ENCODE measurements at regions of chr2 and their contacts with region 1.

Region 1: DNA sequence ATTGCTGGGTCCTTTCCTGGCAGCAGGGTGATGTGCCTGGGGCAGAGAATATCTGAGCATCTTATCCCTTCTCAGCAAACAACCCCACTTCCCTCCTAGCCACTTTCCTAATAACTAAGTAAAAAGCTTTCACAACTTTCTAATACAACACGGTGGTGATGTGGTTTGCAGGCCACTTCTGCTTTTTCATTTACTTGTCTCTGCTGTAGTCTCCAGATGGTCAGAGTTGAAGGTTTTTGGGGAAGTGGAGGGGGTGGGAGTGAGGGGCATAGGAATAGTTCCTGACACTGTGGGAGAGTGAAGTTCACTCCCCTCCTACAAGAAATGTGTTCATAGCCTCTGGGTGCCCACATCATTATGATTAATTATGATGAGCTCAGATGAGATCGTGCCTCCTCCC is 11.6 kb downstream of the OXER1 start:
- DNase-seq: peak; percentile 94 to 97 (median 95)
- H3K4me3 ChIP-seq: peak overlapping the region in 1 of 3 experiments; percentile 41
- H3K4me3 Mint-ChIP-seq: peak overlapping the region; percentile 28 to 75
- H3K27ac ChIP-seq: peak overlapping the region; percentile 89 to 90
- H3K27ac Mint-ChIP-seq: peak overlapping the region; percentile 97 to 99 (median 98)
- H3K4me1 ChIP-seq: peaks cover 64 to 71% of the 10 kb centered on the region in 2 donors
- H3K4me1 Mint-ChIP-seq: peaks cover 69% of the 10 kb centered on the region
- H3K27me3 ChIP-seq: no peaks in the 10 kb centered on the region
- H3K27me3 Mint-ChIP-seq: no peaks in the 10 kb centered on the region
- CTCF ChIP-seq: no peak

Region 2: DNA sequence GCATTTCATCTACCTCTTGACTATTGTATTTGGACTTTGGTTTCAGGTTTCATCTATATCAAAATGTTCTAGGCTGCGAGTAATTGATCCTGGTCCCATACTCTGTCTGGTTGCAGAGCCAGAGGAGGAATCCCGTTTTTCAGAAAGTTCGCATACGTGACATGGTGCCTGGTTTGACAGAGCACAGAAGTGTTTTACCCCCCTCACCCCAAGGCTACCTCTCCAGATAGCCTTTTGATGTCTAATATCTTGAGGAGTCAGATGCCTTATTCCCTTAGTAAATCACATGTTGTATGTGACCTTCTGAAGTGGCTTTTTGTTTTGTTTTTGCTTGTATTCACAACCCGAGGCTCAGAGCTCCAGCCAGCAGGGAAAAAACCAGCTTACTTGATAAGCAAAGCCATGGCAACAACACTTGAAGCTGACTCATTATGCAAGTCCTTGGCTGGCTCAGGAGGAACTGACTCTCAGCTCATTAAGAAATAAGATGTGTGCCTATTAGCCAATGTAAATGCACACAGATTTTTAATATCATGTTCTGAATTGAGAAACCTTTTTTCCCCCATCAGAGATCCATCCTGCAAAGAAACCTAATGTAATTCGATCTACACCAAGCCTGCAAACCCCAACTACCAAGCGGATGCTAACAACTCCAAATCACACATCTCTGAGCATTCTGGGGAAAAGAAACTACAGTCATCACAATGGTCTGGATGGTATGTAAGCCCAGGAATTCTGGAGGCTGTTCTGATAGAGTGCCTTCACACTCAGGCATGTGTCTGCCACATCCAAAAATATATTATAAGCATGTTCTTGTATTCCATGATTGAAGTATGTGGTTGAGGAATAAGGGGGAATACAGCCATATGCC is 29.8 kb before region 1 on chr2:
- intact Hi-C with region 1: loop called (anchors 2 to 5 kb)
- DNase-seq: peak; percentile 93 to 95 (median 94)
- H3K4me3 ChIP-seq: no peak overlapping the region
- H3K4me3 Mint-ChIP-seq: peak overlapping the region in 1 of 2 donors; percentile 63
- H3K27ac ChIP-seq: peak overlapping the region; percentile 26 to 76
- H3K27ac Mint-ChIP-seq: peak overlapping the region; percentile 84 to 95 (median 92)
- H3K4me1 ChIP-seq: peaks cover 36% of the 10 kb centered on the region in 2 donors
- H3K4me1 Mint-ChIP-seq: peaks cover 33% of the 10 kb centered on the region
- H3K27me3 ChIP-seq: no peaks in the 10 kb centered on the region
- H3K27me3 Mint-ChIP-seq: no peaks in the 10 kb centered on the region
- CTCF ChIP-seq: no peak

Region 3: DNA sequence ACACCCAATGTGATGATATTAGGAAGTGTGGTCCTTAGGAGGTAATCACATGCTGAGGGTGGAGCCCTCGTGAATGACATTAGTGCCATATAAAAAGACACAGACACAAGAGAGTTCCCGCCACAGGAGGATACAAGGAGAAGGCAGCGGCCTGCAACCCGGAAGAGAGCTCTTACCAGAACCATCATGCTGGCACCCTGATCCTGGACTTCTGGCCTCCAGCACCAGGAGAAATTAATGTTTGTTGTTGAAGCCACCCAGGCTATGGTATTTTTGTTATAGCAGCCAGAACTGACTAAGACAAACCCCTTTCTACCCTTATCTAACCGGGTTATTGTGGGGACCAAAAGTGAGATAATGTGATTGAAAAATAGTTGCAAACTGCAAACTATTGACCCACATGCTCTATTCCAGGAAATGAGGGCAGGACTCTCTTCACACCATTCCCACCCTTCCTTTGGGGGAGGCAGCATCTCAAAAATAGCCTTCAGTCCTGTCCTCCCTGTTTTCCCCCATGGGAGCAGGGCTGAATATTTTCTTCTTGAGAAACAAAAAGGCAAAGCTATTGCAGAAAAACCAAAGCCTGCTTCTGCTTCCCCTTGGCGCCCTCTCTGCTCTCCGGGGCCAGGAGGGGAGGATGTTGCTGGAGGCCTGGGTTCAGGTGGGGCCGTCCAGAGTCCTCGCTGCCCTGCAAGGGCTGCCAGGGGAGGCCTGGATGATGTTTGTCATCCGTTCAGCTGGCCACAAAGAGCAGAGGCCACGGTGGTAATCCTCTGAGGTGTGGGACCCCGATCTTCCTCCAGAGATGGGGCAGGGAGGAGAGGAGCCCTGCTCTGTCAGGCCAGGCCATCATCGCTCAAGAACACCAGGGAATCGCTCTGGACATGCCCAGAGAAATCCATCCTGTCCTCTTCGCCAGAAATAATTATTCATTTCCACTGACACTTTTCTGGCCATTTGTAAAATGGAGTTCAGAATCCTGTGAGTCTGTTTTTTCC is 113.9 kb after region 1 on chr2:
- intact Hi-C with region 1: no loop called
- DNase-seq: no peak
- H3K4me3 ChIP-seq: no peak overlapping the region
- H3K4me3 Mint-ChIP-seq: no peak overlapping the region
- H3K27ac ChIP-seq: no peak overlapping the region
- H3K27ac Mint-ChIP-seq: no peak overlapping the region
- H3K4me1 ChIP-seq: no peaks in the 10 kb centered on the region
- H3K4me1 Mint-ChIP-seq: peaks cover 3% of the 10 kb centered on the region
- H3K27me3 ChIP-seq: no peaks in the 10 kb centered on the region
- H3K27me3 Mint-ChIP-seq: peaks cover 0 to 6% (median 1%) of the 10 kb centered on the region in 3 donors
- CTCF ChIP-seq: no peak

Region 4: DNA sequence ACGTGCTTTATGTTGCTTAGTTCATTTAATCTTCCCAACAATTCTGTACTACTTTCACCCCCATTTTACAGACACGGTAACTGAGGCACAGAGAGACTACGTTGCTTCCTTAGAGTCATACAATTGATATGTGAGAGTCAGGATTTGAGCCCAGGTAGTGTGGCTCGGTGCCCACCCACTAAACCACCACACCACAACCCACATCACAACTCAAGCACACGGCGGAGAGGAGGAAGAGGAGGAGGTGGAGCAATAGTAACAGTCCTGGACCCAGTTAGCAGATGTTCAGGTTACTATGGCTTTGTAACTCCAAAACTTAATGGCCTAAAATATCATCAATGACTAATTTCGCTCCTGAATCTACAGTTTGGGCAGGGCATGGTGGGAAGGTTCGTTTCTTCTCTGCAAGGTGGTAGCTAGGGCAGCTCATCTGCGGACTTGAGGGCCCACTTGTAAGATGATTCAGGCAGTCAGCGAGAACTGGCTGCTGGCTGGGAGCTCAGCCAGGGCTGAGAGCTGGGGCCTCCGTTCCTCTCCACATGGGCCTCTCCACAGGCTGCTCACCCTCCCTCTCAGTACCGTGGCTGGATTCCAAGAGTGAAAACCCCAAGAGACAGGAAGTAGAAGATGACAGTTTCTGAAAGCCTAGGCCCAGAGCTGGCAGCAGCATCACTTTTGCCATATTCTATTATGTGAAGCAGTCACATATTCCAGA is 307.0 kb after region 1 on chr2:
- intact Hi-C with region 1: no loop called
- DNase-seq: peak; percentile 50 to 66 (median 54)
- H3K4me3 ChIP-seq: no peak overlapping the region
- H3K4me3 Mint-ChIP-seq: peak overlapping the region; percentile 10 to 35
- H3K27ac ChIP-seq: peak overlapping the region; percentile 52 to 61
- H3K27ac Mint-ChIP-seq: peak overlapping the region; percentile 61 to 85 (median 69)
- H3K4me1 ChIP-seq: peaks cover 22 to 23% of the 10 kb centered on the region in 2 donors
- H3K4me1 Mint-ChIP-seq: peaks cover 41% of the 10 kb centered on the region
- H3K27me3 ChIP-seq: no peaks in the 10 kb centered on the region
- H3K27me3 Mint-ChIP-seq: peaks cover 1 to 10% (median 3%) of the 10 kb centered on the region in 3 donors
- CTCF ChIP-seq: no peak